ENCODE measurements at regions of chrX and their contacts with region 1.

Region 1: DNA sequence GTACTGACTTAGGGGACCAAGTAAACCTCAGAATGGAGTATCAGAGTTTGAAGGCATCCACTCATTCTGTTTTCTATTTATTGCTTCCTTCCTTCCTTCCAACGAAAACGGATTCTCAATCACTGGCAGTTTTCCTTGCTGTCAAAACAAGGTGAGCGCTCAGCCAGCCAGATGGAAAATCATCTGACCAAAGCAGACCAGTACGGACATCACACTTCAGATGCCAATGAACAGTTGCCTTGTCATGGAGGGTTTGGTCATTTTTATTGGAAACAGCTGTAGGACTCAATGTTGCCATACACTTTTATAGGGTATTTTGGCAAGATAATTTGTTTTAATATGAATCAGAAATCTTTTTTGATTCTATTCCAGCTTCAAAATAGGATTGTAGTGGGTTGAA is 16.6 kb downstream of the GEMIN8 start:
- DNase-seq: no peak
- H3K4me3 ChIP-seq: no peak overlapping the region
- H3K27ac ChIP-seq: no peak overlapping the region
- H3K4me1 ChIP-seq: peaks cover 19% of the 10 kb centered on the region
- H3K27me3 ChIP-seq: no peaks in the 10 kb centered on the region
- CTCF ChIP-seq: no peak

Region 2: DNA sequence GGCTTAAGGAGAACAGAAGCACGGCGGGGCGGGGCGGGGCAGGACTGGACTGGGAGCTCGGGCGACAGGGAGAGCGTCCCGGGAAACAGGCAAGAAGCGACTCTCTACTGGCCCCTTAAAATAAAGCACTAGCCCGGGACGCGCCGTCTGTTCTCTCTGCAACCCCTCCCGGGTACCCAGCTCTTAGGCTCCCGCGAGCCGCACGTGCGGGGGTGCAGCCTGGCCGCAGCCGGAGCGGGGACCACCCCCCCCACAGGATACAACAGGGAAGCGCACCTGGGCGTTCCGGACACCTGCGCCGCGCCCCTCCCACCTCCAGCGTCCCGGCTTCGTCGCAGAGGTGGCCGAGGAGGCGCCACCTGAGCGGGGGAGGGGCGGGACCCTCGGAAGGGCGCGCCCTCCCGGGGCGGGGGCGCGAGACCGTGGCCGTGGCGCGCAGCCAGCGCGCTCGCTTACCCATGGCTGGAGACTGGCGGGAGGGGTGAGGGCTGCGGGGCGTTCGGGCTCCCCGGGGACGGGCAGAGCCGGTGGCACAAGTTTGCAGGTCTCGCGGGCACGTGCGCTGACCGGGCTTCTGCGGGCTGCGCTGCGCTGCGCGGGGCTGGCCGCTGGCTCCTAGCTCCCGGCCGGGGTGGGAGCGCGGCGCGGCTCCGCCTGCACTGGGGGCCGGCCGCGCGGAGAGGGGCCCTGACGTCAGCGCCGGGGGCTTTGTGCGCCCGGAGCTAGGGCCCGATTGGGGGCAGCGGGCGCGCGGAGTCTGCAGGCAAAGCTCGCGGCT is 74.8 kb before region 1 on chrX:
- CTCF ChIA-PET with region 1: interaction called, 8 read pairs
- dilution Hi-C with region 1: no loop called
- in situ Hi-C with region 1: no loop called
- intact Hi-C with region 1: loop called (anchors 5 kb)
- DNase-seq: no peak
- H3K4me3 ChIP-seq: peak overlapping the region; percentile 63 to 66 (median 65)
- H3K27ac ChIP-seq: no peak overlapping the region
- H3K4me1 ChIP-seq: peaks cover 30% of the 10 kb centered on the region
- H3K27me3 ChIP-seq: no peaks in the 10 kb centered on the region
- CTCF ChIP-seq: no peak

Region 3: DNA sequence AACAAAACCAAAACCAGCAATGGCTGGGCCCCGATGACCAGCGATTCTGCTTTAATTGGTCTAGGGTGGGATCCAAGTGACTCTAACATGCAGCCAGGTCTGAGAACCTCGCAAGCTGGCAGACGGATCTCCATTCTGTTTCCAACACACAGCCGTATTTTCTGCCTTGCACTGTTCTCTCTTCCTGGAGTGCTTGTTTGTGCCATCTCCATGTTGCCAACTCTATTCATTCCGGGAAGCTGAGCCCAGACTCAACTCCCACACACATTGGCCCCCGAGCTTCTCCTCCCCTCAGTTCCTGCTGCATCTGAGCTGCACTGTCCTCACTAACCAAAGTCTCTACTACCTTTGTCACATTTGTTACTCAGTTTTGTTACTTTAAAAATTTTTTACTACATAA is 18.9 kb before region 1 on chrX:
- CTCF ChIA-PET with region 1: no interaction called
- dilution Hi-C with region 1: no loop called
- in situ Hi-C with region 1: no loop called
- intact Hi-C with region 1: loop called (anchors 2 kb)
- DNase-seq: no peak
- H3K4me3 ChIP-seq: no peak overlapping the region
- H3K27ac ChIP-seq: peak overlapping the region; percentile 73
- H3K4me1 ChIP-seq: peaks cover 20% of the 10 kb centered on the region
- H3K27me3 ChIP-seq: no peaks in the 10 kb centered on the region
- CTCF ChIP-seq: no peak